ENCODE measurements at regions of chr2 and their contacts with region 1.

Region 1: GRCh38 chr2:219459460-219460311 is 25.0 kb downstream of the SPEG start:
- DNase-seq: peak; percentile 70 to 73
- H3K4me3 ChIP-seq: no peak overlapping the region
- H3K4me3 Mint-ChIP-seq: no peak overlapping the region
- H3K27ac Mint-ChIP-seq: no peak overlapping the region
- H3K4me1 ChIP-seq: 0 out of 2 replicates have a peak, but pooled peaks cover 4% of the 10 kb centered on the region
- H3K4me1 Mint-ChIP-seq: peaks cover 7% of the 10 kb centered on the region
- H3K27me3 ChIP-seq: no peaks in the 10 kb centered on the region
- H3K27me3 Mint-ChIP-seq: no peaks in the 10 kb centered on the region
- CTCF ChIP-seq: peak; percentile 87 to 93

Region 2: GRCh38 chr2:219402665-219403515 is 56.8 kb before region 1 on chr2:
- CTCF ChIA-PET with region 1: interaction called, 13 read pairs
- POLR2A ChIA-PET with region 1: no interaction called
- intact Hi-C with region 1: loop called (anchors 1 kb)
- DNase-seq: peak; percentile 78 to 80
- H3K4me3 ChIP-seq: no peak overlapping the region
- H3K4me3 Mint-ChIP-seq: no peak overlapping the region
- H3K27ac Mint-ChIP-seq: no peak overlapping the region
- H3K4me1 ChIP-seq: peaks cover 28% of the 10 kb centered on the region
- H3K4me1 Mint-ChIP-seq: peaks cover 28% of the 10 kb centered on the region
- H3K27me3 ChIP-seq: no peaks in the 10 kb centered on the region
- H3K27me3 Mint-ChIP-seq: no peaks in the 10 kb centered on the region
- CTCF ChIP-seq: peak; percentile 82 to 95

Region 3: GRCh38 chr2:219441451-219442255 is 18.0 kb before region 1 on chr2:
- CTCF ChIA-PET with region 1: interaction called, 5 read pairs
- POLR2A ChIA-PET with region 1: no interaction called
- intact Hi-C with region 1: loop called (anchors 1 kb)
- DNase-seq: peak; percentile 69 to 72
- H3K4me3 ChIP-seq: peak overlapping the region; percentile 55
- H3K4me3 Mint-ChIP-seq: peak overlapping the region; percentile 86
- H3K27ac Mint-ChIP-seq: peak overlapping the region; percentile 53
- H3K4me1 ChIP-seq: peaks cover 10% of the 10 kb centered on the region
- H3K4me1 Mint-ChIP-seq: no peaks in the 10 kb centered on the region
- H3K27me3 ChIP-seq: no peaks in the 10 kb centered on the region
- H3K27me3 Mint-ChIP-seq: no peaks in the 10 kb centered on the region
- CTCF ChIP-seq: no peak

Region 4: DNA sequence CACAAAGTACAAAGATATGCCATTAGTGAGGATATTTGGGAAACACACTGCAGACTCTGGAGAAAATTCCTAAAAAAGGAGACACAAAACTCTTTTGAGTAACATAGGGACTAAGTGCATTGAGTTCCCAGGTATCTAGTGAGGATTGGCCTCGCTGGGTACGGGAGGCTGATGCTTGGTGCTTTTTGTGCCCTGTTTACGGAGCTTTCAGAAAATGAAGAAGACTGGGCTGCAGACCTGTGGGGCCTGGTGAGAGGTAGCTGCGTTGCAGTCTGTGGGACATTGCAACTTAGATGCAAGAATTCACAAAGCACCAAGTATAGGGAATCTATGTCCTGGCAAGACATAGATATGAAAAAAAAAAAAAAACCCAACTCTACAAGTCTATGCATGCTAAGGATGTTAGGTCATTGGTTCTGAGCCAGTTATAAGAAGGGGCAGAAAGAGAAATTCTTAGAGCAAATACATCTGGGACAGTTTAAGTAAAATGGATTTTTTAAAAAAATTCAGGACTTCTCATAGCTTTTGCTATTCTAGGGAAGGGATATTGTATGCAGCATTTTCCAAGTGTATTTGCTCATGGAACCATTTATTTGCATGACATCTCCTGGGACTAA is 323.8 kb after region 1 on chr2:
- CTCF ChIA-PET with region 1: no interaction called
- POLR2A ChIA-PET with region 1: no interaction called
- intact Hi-C with region 1: no loop called
- DNase-seq: no peak
- H3K4me3 ChIP-seq: no peak overlapping the region
- H3K4me3 Mint-ChIP-seq: no peak overlapping the region
- H3K27ac Mint-ChIP-seq: no peak overlapping the region
- H3K4me1 ChIP-seq: no peaks in the 10 kb centered on the region
- H3K4me1 Mint-ChIP-seq: no peaks in the 10 kb centered on the region
- H3K27me3 ChIP-seq: no peaks in the 10 kb centered on the region; the same call in 1 of the 2 replicates
- H3K27me3 Mint-ChIP-seq: peaks cover 5% of the 10 kb centered on the region
- CTCF ChIP-seq: no peak